ENCODE measurements at regions of chr11 and their contacts with region 1.

Region 1: GRCh38 chr11:59753650-59754493 is 1.3 kb upstream of the STX3 start:
- DNase-seq: peak; percentile 74 to 87 (median 76)
- H3K4me3 ChIP-seq: peak overlapping the region; percentile 76
- H3K4me3 Mint-ChIP-seq: peak overlapping the region; percentile 89 to 95 (median 92)
- H3K27ac ChIP-seq: peak overlapping the region; percentile 7
- H3K27ac Mint-ChIP-seq: peak overlapping the region in 7 of 8 donors; percentile 37 to 84 (median 72)
- H3K4me1 ChIP-seq: peaks cover 18% of the 10 kb centered on the region
- H3K4me1 Mint-ChIP-seq: peaks cover 21 to 35% (median 31%) of the 10 kb centered on the region in 3 donors
- H3K27me3 ChIP-seq: no peaks in the 10 kb centered on the region
- H3K27me3 Mint-ChIP-seq: peaks cover 12 to 14% of the 10 kb centered on the region in 2 donors

Region 2: GRCh38 chr11:59668950-59669610 is 84.8 kb before region 1 on chr11 and contains the start of gene PATL1:
- CTCF ChIA-PET with region 1: interaction called, 4 read pairs
- POLR2A ChIA-PET with region 1: interaction called, 14 read pairs
- DNase-seq: peak; percentile 99 to 100 (median 99)
- H3K4me3 ChIP-seq: peak within 1 kb of the TSS; percentile 73
- H3K4me3 Mint-ChIP-seq: peak within 1 kb of the TSS; percentile 96 to 99 (median 98)
- H3K27ac ChIP-seq: peak within 1 kb of the TSS; percentile 97
- H3K27ac Mint-ChIP-seq: peak within 1 kb of the TSS; percentile 99 to 100 (median 100)
- H3K4me1 ChIP-seq: peaks cover 23% of the 10 kb centered on the region
- H3K4me1 Mint-ChIP-seq: peaks cover 33 to 52% (median 47%) of the 10 kb centered on the region in 3 donors
- H3K27me3 ChIP-seq: no peaks in the 10 kb centered on the region
- H3K27me3 Mint-ChIP-seq: no peaks in the 10 kb centered on the region
- total RNA-seq, gene PATL1: 61.3 to 65.8 TPM

Region 3: GRCh38 chr11:59689015-59689414 is 64.9 kb before region 1 on chr11:
- CTCF ChIA-PET with region 1: no interaction called
- POLR2A ChIA-PET with region 1: no interaction called
- DNase-seq: no peak
- H3K4me3 ChIP-seq: no peak overlapping the region
- H3K4me3 Mint-ChIP-seq: no peak overlapping the region
- H3K27ac ChIP-seq: no peak overlapping the region
- H3K27ac Mint-ChIP-seq: no peak overlapping the region
- H3K4me1 ChIP-seq: no peaks in the 10 kb centered on the region
- H3K4me1 Mint-ChIP-seq: no peaks in the 10 kb centered on the region
- H3K27me3 ChIP-seq: no peaks in the 10 kb centered on the region
- H3K27me3 Mint-ChIP-seq: peaks cover 22 to 60% of the 10 kb centered on the region in 2 donors

Region 4: DNA sequence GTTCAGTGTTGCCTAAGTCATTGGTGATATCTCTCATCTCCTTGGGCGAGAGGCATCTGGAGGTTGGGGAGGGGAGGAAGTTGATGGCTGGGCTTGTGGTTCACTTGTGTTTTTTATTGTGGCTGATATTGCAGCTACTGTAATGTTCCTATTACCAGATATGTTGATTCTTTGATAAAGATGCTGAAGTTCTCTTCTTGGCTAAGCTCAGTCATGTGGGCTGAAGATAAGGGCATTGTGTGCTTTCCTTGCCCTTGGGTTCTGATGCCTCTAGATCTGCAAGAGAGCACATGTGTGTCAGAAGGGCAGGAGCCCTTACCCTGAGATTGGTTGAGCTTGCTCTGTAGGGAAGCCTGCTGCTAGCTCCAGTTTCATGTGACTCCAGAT is 13.3 kb after region 1 on chr11:
- CTCF ChIA-PET with region 1: interaction called, 41 read pairs
- POLR2A ChIA-PET with region 1: no interaction called
- DNase-seq: peak in 2 of 5 donors; percentile 12 to 37
- H3K4me3 ChIP-seq: no peak overlapping the region
- H3K4me3 Mint-ChIP-seq: peak overlapping the region in 6 of 7 donors; percentile 1 to 63 (median 56)
- H3K27ac ChIP-seq: no peak overlapping the region
- H3K27ac Mint-ChIP-seq: peak overlapping the region in 7 of 8 donors; percentile 19 to 88 (median 52)
- H3K4me1 ChIP-seq: peaks cover 44% of the 10 kb centered on the region
- H3K4me1 Mint-ChIP-seq: peaks cover 14 to 19% (median 18%) of the 10 kb centered on the region in 3 donors
- H3K27me3 ChIP-seq: no peaks in the 10 kb centered on the region
- H3K27me3 Mint-ChIP-seq: peaks cover 0 to 4% of the 10 kb centered on the region in 2 donors

Region 5: GRCh38 chr11:59802639-59803176 is 48.8 kb after region 1 on chr11:
- CTCF ChIA-PET with region 1: interaction called, 113 read pairs
- POLR2A ChIA-PET with region 1: no interaction called
- DNase-seq: peak; percentile 11 to 61 (median 52)
- H3K4me3 ChIP-seq: no peak overlapping the region
- H3K4me3 Mint-ChIP-seq: no peak overlapping the region
- H3K27ac ChIP-seq: no peak overlapping the region
- H3K27ac Mint-ChIP-seq: no peak overlapping the region
- H3K4me1 ChIP-seq: no peaks in the 10 kb centered on the region
- H3K4me1 Mint-ChIP-seq: no peaks in the 10 kb centered on the region
- H3K27me3 ChIP-seq: no peaks in the 10 kb centered on the region
- H3K27me3 Mint-ChIP-seq: no peaks in the 10 kb centered on the region

Region 6: GRCh38 chr11:59810189-59810910 is 56.5 kb after region 1 on chr11 and contains the start of gene MRPL16:
- CTCF ChIA-PET with region 1: interaction called, 113 read pairs
- POLR2A ChIA-PET with region 1: interaction called, 6 read pairs
- DNase-seq: peak; percentile 81 to 93 (median 83)
- H3K4me3 ChIP-seq: peak within 1 kb of the TSS; percentile 94
- H3K4me3 Mint-ChIP-seq: peak within 1 kb of the TSS; percentile 91 to 97 (median 93)
- H3K27ac ChIP-seq: peak within 1 kb of the TSS; percentile 80
- H3K27ac Mint-ChIP-seq: peak within 1 kb of the TSS; percentile 84 to 96 (median 92)
- H3K4me1 ChIP-seq: peaks cover 17% of the 10 kb centered on the region
- H3K4me1 Mint-ChIP-seq: peaks cover 26 to 33% (median 32%) of the 10 kb centered on the region in 3 donors
- H3K27me3 ChIP-seq: no peaks in the 10 kb centered on the region
- H3K27me3 Mint-ChIP-seq: peaks cover 0 to 7% of the 10 kb centered on the region in 2 donors
- total RNA-seq, gene MRPL16: 83.5 to 84.5 TPM

Measured in CD8-positive, alpha-beta memory T cell (primary cell).